Activated T-helper 2 cell treated with anti-CD3 and anti-CD28 coated beads, Interferon-gamma antibody, Interleukin-2, Interleukin-4, amounts not matched to agents 10 μg/mL and 5 μg/mL and 100 μg/mL, durations not matched to agents 14 hours and 24 hours and 36 hours (primary cell): ENCODE measurements at regions of chr3 and their contacts with region 1.

Region 1: DNA sequence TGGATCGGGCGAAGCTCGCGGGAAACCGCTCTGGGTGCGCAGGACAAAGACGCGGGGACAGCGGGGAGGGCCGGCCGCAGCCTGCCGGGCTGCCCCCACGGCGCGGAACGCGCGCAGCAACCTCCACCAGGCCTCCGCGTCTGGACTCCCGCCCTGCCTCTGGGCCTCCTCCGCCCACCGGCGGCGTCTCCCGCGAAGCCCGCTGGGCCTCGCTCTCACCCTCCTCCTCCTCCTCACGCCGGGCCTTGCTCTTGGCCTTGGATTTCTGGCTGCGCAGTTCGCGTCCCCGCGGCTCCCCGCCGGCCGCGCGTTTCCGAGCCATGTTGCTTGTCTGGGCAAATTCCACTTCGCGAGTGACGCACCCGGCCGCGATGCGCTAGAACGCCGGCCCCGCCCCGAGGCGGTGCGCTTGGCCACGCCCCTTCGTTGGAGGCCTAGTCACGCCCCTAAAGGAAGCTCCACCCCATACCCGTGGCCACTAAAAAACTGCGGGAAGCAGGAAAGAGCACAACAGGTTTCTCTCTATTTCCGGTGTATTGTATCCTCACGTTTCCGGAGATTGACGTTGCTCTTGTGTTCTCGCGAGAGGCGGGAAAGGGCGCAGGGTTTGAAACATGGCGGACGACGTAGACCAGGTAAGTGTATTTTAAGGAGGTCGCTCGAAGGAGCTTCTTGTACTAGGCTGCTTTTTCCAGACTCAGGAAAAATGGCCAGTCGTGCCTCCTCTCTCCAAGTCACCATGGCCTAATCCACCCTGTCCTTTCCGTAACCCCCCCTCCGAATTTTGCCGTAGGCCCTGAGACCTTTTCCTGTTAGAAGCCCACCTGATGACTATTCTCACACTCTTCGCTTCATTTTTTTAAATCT is at the starts of genes LSM3 and XPC:
- DNase-seq: peak; percentile 97
- H3K4me3 Mint-ChIP-seq: peak within 1 kb of the TSS; percentile 89
- H3K27ac Mint-ChIP-seq: peak within 1 kb of the TSS; percentile 99
- H3K4me1 Mint-ChIP-seq: peaks cover 55% of the 10 kb centered on the region
- H3K27me3 Mint-ChIP-seq: no peaks in the 10 kb centered on the region
- total RNA-seq, gene LSM3: 15.1 and 18.3 TPM in 2 replicates
- total RNA-seq, gene XPC: 31.4 and 33.2 TPM in 2 replicates

Region 2: GRCh38 chr3:13479581-13480339 is 698.7 kb before region 1 on chr3 and contains the start of gene HDAC11:
- intact Hi-C with region 1: loop called (anchors 1 kb)
- DNase-seq: peak; percentile 97
- H3K4me3 Mint-ChIP-seq: peak within 1 kb of the TSS; percentile 86
- H3K27ac Mint-ChIP-seq: peak within 1 kb of the TSS; percentile 79
- H3K4me1 Mint-ChIP-seq: peaks cover 2% of the 10 kb centered on the region
- H3K27me3 Mint-ChIP-seq: peaks cover 3% of the 10 kb centered on the region
- total RNA-seq, gene HDAC11: 1.7 and 2.6 TPM in 2 replicates

Region 3: DNA sequence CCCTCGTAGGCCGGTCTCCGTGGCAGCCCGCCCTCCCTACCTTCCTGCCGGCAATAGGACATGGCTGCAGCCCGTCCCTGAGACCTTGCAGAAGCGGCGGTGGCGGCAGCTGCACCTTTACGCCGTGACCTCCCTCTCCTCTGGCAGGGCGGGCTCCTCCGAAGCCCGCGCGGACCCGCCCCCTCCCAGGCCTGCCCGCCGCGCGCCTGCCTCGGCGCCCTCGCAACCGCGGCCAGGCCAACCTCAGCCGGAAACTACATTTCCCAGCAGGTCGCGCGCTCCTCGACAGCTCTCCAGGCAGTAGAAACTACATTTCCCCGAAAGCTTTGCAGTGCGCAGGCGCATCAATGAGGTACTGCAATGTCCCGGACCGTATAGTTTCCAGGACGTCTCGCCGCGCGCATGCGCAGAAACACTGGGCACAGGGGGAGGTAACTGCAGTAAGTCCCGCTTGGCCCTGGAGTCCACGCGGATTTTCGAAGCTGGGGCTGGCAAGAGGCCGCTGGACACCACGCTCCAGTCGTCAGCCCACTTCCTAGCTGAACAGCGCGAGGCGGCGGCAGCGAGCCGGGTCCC is 53.8 kb before region 1 on chr3 and contains the starts of genes CHCHD4 and TMEM43:
- intact Hi-C with region 1: loop called (anchors 1 kb)
- DNase-seq: peak; percentile 98
- H3K4me3 Mint-ChIP-seq: peak within 1 kb of the TSS; percentile 97
- H3K27ac Mint-ChIP-seq: peak within 1 kb of the TSS; percentile 93
- H3K4me1 Mint-ChIP-seq: peaks cover 40% of the 10 kb centered on the region
- H3K27me3 Mint-ChIP-seq: no peaks in the 10 kb centered on the region
- total RNA-seq, gene CHCHD4: 24.8 and 25.0 TPM in 2 replicates
- total RNA-seq, gene TMEM43: 36.7 and 39.2 TPM in 2 replicates

Region 4: GRCh38 chr3:14261229-14261628 is 82.7 kb after region 1 on chr3:
- intact Hi-C with region 1: no loop called
- DNase-seq: peak; percentile 48
- H3K4me3 Mint-ChIP-seq: no peak overlapping the region
- H3K27ac Mint-ChIP-seq: no peak overlapping the region
- H3K4me1 Mint-ChIP-seq: no peaks in the 10 kb centered on the region
- H3K27me3 Mint-ChIP-seq: peaks cover 11% of the 10 kb centered on the region

Region 5: GRCh38 chr3:14402304-14402811 is 223.9 kb after region 1 on chr3 and contains the start of gene SLC6A6:
- intact Hi-C with region 1: loop called (anchors 5 kb)
- DNase-seq: peak; percentile 91
- H3K4me3 Mint-ChIP-seq: peak within 1 kb of the TSS; percentile 93
- H3K27ac Mint-ChIP-seq: peak within 1 kb of the TSS; percentile 95
- H3K4me1 Mint-ChIP-seq: peaks cover 35% of the 10 kb centered on the region
- H3K27me3 Mint-ChIP-seq: no peaks in the 10 kb centered on the region
- total RNA-seq, gene SLC6A6: 55.1 and 55.8 TPM in 2 replicates

Region 6: GRCh38 chr3:14651440-14652251 is 473.2 kb after region 1 on chr3 and contains the start of gene CCDC174:
- intact Hi-C with region 1: loop called (anchors 1 kb)
- DNase-seq: peak; percentile 94
- H3K4me3 Mint-ChIP-seq: peak within 1 kb of the TSS; percentile 92
- H3K27ac Mint-ChIP-seq: peak within 1 kb of the TSS; percentile 95
- H3K4me1 Mint-ChIP-seq: peaks cover 30% of the 10 kb centered on the region
- H3K27me3 Mint-ChIP-seq: no peaks in the 10 kb centered on the region
- total RNA-seq, gene CCDC174: 15.0 and 18.8 TPM in 2 replicates